Gastrocnemius medialis (tissue), 4 donors: ENCODE measurements at regions of chr12 and their contacts with region 1.

Region 1: GRCh38 chr12:2959505-2960389 is 550 bp downstream of the TEAD4 start:
- DNase-seq: peak; percentile 56 to 80
- ATAC-seq: peak; percentile 33 to 43
- H3K4me3 ChIP-seq: peak overlapping the region; percentile 61 to 87 (median 74)
- H3K27ac ChIP-seq: peak overlapping the region; percentile 87 to 98 (median 96)
- H3K4me1 ChIP-seq: peaks cover 40 to 46% of the 10 kb centered on the region in 2 donors
- H3K27me3 ChIP-seq: no peaks in the 10 kb centered on the region
- CTCF ChIP-seq: peak in 3 of 5 experiments; percentile 18 to 26 (median 20)
- POLR2A ChIP-seq: peak; percentile 91

Region 2: DNA sequence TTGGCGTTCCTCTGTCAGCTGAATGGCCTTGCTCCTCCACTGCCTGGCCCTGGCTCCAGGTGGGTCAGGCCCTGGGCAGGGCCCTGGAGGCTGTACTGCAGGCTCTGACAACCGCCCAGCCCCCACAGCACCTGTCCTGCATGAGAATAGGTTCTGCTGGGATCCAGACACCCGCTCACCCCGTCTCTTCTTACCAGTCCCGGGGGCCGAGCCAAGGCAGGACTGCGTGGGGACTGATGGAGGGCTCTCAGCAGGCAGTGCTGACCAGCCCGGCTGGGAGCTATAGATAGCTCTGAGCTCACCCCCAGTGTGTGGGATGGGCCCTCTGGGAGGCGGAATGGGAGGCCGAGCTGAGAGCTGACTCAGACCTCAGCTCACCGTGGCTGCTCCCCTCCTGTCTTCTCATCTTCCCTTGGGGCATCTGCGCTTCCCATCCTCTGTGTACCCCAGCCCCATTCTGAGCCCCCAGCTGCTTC is 39.1 kb after region 1 on chr12:
- in situ Hi-C with region 1: no loop called
- intact Hi-C with region 1: loop called (anchors 1 kb)
- DNase-seq: peak; percentile 99 to 100
- ATAC-seq: peak; percentile 65 to 76
- H3K4me3 ChIP-seq: peak overlapping the region; percentile 21 to 46 (median 32)
- H3K27ac ChIP-seq: peak overlapping the region; percentile 95 to 99 (median 97)
- H3K4me1 ChIP-seq: peaks cover 49 to 68% of the 10 kb centered on the region in 2 donors
- H3K27me3 ChIP-seq: no peaks in the 10 kb centered on the region
- CTCF ChIP-seq: no peak
- POLR2A ChIP-seq: peak; percentile 58 to 70

Region 3: GRCh38 chr12:3004655-3005565 is 45.2 kb after region 1 on chr12:
- in situ Hi-C with region 1: no loop called
- intact Hi-C with region 1: loop called (anchors 1 kb)
- DNase-seq: peak in 1 of 2 donors; percentile 58
- ATAC-seq: no peak
- H3K4me3 ChIP-seq: no peak overlapping the region
- H3K27ac ChIP-seq: peak overlapping the region; percentile 95 to 99 (median 97)
- H3K4me1 ChIP-seq: peaks cover 50 to 60% of the 10 kb centered on the region in 2 donors
- H3K27me3 ChIP-seq: no peaks in the 10 kb centered on the region
- CTCF ChIP-seq: peak in 1 of 5 experiments; percentile 37
- POLR2A ChIP-seq: no peak

Region 4: DNA sequence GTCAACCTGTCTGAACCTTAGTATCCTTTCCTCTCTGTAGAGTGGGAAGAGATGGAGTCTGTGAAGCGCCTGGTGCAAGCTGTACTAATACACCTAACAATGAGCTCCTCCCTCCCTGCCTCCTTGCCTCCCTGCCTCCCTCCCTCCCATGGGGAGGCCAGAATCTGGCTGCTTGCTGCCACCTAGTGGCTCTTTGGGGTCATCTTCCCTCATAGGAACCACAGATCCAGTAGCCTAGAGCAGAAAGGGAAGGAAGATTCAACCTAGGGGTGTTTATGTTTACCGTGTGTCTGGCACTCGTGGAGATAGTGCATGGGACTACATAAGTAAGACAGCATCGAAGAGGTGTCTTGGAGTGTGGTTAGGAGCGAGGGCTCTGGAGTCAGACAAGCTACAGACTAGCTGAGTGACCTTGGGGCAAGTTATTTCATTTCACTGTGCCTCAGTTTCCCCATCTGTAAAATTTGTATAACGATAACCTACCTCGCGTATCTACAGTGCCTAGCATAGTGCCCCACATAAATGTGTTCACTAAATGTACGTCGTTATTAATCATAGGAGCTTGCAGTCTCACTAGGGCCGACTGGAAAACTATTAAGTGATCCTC is 81.9 kb after region 1 on chr12:
- in situ Hi-C with region 1: loop called in 2 of 4 experiments (anchors 5 to 10 kb)
- intact Hi-C with region 1: loop called (anchors 1 kb)
- DNase-seq: peak in 1 of 2 donors; percentile 69
- ATAC-seq: peak; percentile 57 to 67
- H3K4me3 ChIP-seq: no peak overlapping the region
- H3K27ac ChIP-seq: peak overlapping the region in 3 of 4 donors; percentile 4 to 62 (median 39)
- H3K4me1 ChIP-seq: peaks cover 20 to 35% of the 10 kb centered on the region in 2 donors
- H3K27me3 ChIP-seq: no peaks in the 10 kb centered on the region
- CTCF ChIP-seq: peak; percentile 48 to 79 (median 64)
- POLR2A ChIP-seq: no peak